CD4-positive, alpha-beta T cell (primary cell): ENCODE measurements at regions of chr14 and their contacts with region 1.

Region 1: GRCh38 chr14:69129264-69129880 is 23.5 kb downstream of the DCAF5 start:
- DNase-seq: peak; percentile 53 to 90 (median 66)
- ATAC-seq: peak; percentile 92
- H3K4me3 ChIP-seq: no peak overlapping the region
- H3K4me3 Mint-ChIP-seq: peak overlapping the region; percentile 22
- H3K27ac ChIP-seq: no peak overlapping the region
- H3K27ac Mint-ChIP-seq: peak overlapping the region; percentile 61
- H3K4me1 ChIP-seq: peaks cover 17% of the 10 kb centered on the region
- H3K4me1 Mint-ChIP-seq: peaks cover 86% of the 10 kb centered on the region
- H3K27me3 ChIP-seq: no peaks in the 10 kb centered on the region
- H3K27me3 Mint-ChIP-seq: no peaks in the 10 kb centered on the region
- CTCF ChIP-seq: peak; percentile 93

Region 2: DNA sequence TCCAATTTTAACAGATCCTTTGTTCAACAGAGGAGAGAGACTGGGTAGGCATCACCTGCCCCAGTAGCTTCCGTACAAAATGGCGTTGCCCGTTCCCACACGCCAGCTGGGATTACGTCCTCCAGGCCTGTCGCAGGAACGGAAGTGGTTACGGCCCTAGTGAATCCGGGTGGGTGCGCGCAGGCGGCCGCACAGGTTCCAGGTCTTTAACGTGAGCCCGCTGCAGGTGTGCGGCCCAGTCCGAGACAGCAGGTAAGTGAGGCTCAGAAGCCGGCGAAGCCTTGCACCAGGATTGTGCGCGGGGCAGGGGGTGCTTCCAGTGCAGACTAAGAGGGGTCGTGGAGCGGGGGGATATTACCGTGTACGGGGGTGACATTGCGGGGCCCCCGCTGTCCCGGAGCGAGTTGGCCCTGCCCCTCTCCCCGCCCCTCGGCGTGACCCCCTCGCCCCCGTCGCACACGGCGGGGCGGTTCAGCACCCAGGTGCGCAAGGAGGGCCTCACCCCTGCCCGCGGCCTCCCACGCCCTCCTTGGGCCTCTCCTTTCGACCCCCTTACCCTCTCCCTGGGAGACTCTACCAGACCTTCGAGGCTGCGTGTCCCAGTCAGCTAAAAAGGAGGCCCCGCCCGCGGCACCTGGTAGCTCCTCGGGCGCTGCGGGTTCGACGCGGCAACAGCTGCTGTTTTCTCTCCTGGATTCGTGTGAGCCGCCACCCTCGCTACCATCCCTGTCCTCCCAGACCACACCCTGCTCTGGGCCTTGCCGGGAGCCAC is 62.2 kb after region 1 on chr14 and contains the start of gene EXD2:
- CTCF ChIA-PET with region 1: interaction called, 6 read pairs
- POLR2A ChIA-PET with region 1: interaction called, 4 read pairs
- intact Hi-C with region 1: loop called in 1 of 2 experiments (anchors 1 kb)
- DNase-seq: peak; percentile 47 to 85 (median 67)
- ATAC-seq: peak; percentile 76
- H3K4me3 ChIP-seq: peak within 1 kb of the TSS; percentile 86
- H3K4me3 Mint-ChIP-seq: peak within 1 kb of the TSS; percentile 97
- H3K27ac ChIP-seq: peak within 1 kb of the TSS; percentile 41 to 51
- H3K27ac Mint-ChIP-seq: peak within 1 kb of the TSS; percentile 95
- H3K4me1 ChIP-seq: peaks cover 14% of the 10 kb centered on the region
- H3K4me1 Mint-ChIP-seq: peaks cover 29% of the 10 kb centered on the region
- H3K27me3 ChIP-seq: no peaks in the 10 kb centered on the region
- H3K27me3 Mint-ChIP-seq: no peaks in the 10 kb centered on the region
- CTCF ChIP-seq: no peak
- total RNA-seq, gene EXD2: 6.6 to 7.0 TPM

Region 3: DNA sequence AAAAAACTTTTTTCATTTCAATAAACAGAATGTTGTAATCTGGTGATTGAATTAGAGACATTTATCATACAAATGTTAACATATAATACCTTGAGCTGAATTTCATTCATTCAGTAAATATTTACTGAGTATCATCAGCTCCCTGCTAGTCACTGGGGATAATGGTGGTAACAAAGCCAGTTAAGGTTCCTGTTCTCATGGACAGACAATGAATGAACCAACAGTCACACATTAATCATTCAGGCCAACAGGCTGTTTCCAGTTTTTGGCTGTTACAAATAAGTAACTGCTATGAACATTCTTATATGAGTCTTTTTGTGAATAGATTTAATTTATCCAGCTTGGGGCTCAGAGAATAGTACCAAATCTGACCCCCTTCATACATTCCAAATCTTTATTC is 75.4 kb after region 1 on chr14:
- CTCF ChIA-PET with region 1: interaction called, 3 read pairs
- POLR2A ChIA-PET with region 1: no interaction called
- intact Hi-C with region 1: loop called in 1 of 2 experiments (anchors 5 kb)
- DNase-seq: no peak
- ATAC-seq: no peak
- H3K4me3 ChIP-seq: no peak overlapping the region
- H3K4me3 Mint-ChIP-seq: no peak overlapping the region
- H3K27ac ChIP-seq: no peak overlapping the region
- H3K27ac Mint-ChIP-seq: no peak overlapping the region
- H3K4me1 ChIP-seq: no peaks in the 10 kb centered on the region
- H3K4me1 Mint-ChIP-seq: no peaks in the 10 kb centered on the region
- H3K27me3 ChIP-seq: no peaks in the 10 kb centered on the region
- H3K27me3 Mint-ChIP-seq: no peaks in the 10 kb centered on the region
- CTCF ChIP-seq: no peak

Region 4: DNA sequence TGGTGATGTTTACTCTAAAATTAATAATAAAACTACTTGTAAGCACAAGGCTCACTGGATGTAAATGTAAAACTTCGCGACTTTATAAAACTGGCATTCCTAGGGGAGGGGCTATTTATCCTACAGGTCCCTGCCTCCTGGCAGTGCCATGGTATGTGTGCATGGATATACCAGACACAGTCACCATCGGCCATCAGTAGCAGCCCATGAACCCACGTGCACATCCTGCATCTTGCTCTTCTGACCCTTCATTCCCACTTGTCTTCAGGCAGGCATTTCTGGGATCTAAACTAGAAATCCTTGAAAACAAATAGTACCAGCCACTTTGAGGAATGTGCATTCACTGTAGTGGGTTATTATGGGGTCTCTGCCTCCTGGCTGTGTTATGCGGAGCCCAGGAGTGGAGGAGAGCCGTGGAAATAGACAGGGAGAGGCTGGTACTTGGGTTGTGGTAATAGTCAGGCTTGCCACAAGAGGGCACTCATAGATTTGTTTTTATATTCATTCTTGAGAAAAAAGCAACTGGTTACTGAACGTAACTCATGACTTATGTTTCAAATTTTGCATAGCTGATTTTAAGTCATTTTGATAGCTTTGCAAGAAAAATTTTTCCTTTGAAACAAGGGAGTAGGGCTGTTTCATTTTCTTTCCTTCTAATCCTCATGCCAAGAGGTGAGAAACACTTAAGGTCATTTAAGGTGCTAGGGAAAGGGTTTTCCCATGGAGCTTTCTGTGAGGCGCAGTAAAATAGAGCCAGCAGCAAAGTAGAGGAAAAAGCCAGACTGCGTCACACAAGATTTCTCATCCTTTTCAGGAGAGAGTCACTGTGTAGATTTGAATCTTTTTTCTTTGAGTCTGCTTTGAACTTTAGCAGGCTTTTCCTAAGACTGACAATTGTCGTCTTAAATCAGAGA is 113.2 kb after region 1 on chr14:
- CTCF ChIA-PET with region 1: interaction called, 3 read pairs
- POLR2A ChIA-PET with region 1: no interaction called
- intact Hi-C with region 1: loop called (anchors 1 to 2 kb)
- DNase-seq: peak in 13 of 14 experiments; percentile 7 to 74 (median 37)
- ATAC-seq: peak; percentile 77
- H3K4me3 ChIP-seq: no peak overlapping the region
- H3K4me3 Mint-ChIP-seq: no peak overlapping the region
- H3K27ac ChIP-seq: no peak overlapping the region
- H3K27ac Mint-ChIP-seq: no peak overlapping the region
- H3K4me1 ChIP-seq: no peaks in the 10 kb centered on the region
- H3K4me1 Mint-ChIP-seq: peaks cover 6% of the 10 kb centered on the region
- H3K27me3 ChIP-seq: no peaks in the 10 kb centered on the region
- H3K27me3 Mint-ChIP-seq: no peaks in the 10 kb centered on the region
- CTCF ChIP-seq: peak; percentile 91

Region 5: GRCh38 chr14:69460093-69460701 is 330.8 kb after region 1 on chr14:
- CTCF ChIA-PET with region 1: interaction called, 6 read pairs
- POLR2A ChIA-PET with region 1: no interaction called
- intact Hi-C with region 1: loop called (anchors 1 to 2 kb)
- DNase-seq: peak in 13 of 14 experiments; percentile 4 to 77 (median 29)
- ATAC-seq: peak; percentile 81
- H3K4me3 ChIP-seq: no peak overlapping the region
- H3K4me3 Mint-ChIP-seq: no peak overlapping the region
- H3K27ac ChIP-seq: no peak overlapping the region
- H3K27ac Mint-ChIP-seq: no peak overlapping the region
- H3K4me1 ChIP-seq: no peaks in the 10 kb centered on the region
- H3K4me1 Mint-ChIP-seq: no peaks in the 10 kb centered on the region
- H3K27me3 ChIP-seq: no peaks in the 10 kb centered on the region
- H3K27me3 Mint-ChIP-seq: no peaks in the 10 kb centered on the region
- CTCF ChIP-seq: peak; percentile 80

Region 6: GRCh38 chr14:69574263-69574953 is 445.0 kb after region 1 on chr14 and contains the start of gene CCDC177:
- CTCF ChIA-PET with region 1: no interaction called
- POLR2A ChIA-PET with region 1: no interaction called
- intact Hi-C with region 1: loop called (anchors 10 kb)
- DNase-seq: peak; percentile 56 to 83 (median 68)
- ATAC-seq: peak; percentile 87
- H3K4me3 ChIP-seq: peak within 1 kb of the TSS; percentile 55
- H3K4me3 Mint-ChIP-seq: peak within 1 kb of the TSS; percentile 83
- H3K27ac ChIP-seq: no peak within 1 kb of the TSS
- H3K27ac Mint-ChIP-seq: no peak within 1 kb of the TSS
- H3K4me1 ChIP-seq: peaks cover 29% of the 10 kb centered on the region
- H3K4me1 Mint-ChIP-seq: peaks cover 11% of the 10 kb centered on the region
- H3K27me3 ChIP-seq: peaks cover 36 to 49% of the 10 kb centered on the region in 2 experiments
- H3K27me3 Mint-ChIP-seq: peaks cover 61% of the 10 kb centered on the region
- CTCF ChIP-seq: peak; percentile 97
- total RNA-seq, gene CCDC177: not detected